ENCODE measurements at regions of chr11 and their contacts with region 1.

Region 1: GRCh38 chr11:43852057-43852636 is 28.5 kb upstream of the ALKBH3 start:
- DNase-seq: peak; percentile 62 to 76 (median 66)
- ATAC-seq: peak; percentile 96
- H3K4me3 ChIP-seq: no peak overlapping the region
- H3K27ac ChIP-seq: no peak overlapping the region
- H3K4me1 ChIP-seq: no peaks in the 10 kb centered on the region
- H3K27me3 ChIP-seq: peaks cover 0 to 4% of the 10 kb centered on the region in 2 experiments; a peak in 2 of 5 replicates
- CTCF ChIP-seq: peak; percentile 72 to 84 (median 75)
- EP300 ChIP-seq: no peak
- POLR2A ChIP-seq: no peak
- RAD21 ChIP-seq: peak; percentile 80 to 89

Region 2: DNA sequence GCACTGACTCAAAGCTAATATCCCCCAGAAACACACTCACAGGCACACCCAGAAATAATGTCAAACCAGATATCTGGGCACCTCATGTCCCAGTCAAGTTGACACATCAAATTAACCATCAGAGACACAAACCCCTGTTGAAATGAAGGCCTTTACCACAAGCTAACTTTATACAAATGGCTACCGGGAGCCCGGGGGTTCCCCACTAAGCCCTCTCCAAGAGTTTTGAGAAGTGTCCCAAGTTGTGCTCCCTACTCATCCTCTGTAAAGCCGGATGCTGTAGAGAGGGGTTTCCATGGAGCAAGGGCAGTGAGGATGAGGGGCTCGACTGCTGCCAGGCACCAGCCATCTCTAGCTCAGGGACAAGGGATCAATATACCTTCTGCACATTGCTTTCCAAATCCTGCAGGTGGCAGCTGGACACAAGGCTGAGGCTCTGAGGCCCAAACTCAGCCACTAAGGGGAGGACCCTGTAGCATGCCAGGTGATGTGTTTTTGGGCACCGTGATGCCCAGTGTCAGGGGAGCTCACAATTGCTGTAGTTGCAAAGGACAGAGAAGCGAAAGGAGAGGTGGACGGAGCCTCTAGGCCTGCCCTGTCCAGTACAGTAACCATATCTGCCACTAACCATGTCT is 347.7 kb before region 1 on chr11:
- CTCF ChIA-PET with region 1: no interaction called
- POLR2A ChIA-PET with region 1: no interaction called
- in situ Hi-C with region 1: no loop called
- intact Hi-C with region 1: loop called (anchors 5 kb)
- DNase-seq: peak in 2 of 4 experiments; percentile 26 to 37
- ATAC-seq: peak; percentile 76
- H3K4me3 ChIP-seq: no peak overlapping the region
- H3K27ac ChIP-seq: no peak overlapping the region
- H3K4me1 ChIP-seq: no peaks in the 10 kb centered on the region
- H3K27me3 ChIP-seq: peaks cover 4 to 27% of the 10 kb centered on the region in 2 experiments; a peak in 4 of 5 replicates
- CTCF ChIP-seq: peak; percentile 45 to 55 (median 53)
- EP300 ChIP-seq: no peak
- POLR2A ChIP-seq: no peak
- RAD21 ChIP-seq: peak; percentile 60 to 70

Region 3: GRCh38 chr11:43557553-43558110 is 294.5 kb before region 1 on chr11:
- CTCF ChIA-PET with region 1: no interaction called
- POLR2A ChIA-PET with region 1: no interaction called
- in situ Hi-C with region 1: no loop called
- intact Hi-C with region 1: loop called (anchors 5 kb)
- DNase-seq: peak in 1 of 4 experiments; percentile 37
- ATAC-seq: peak; percentile 64
- H3K4me3 ChIP-seq: no peak overlapping the region
- H3K27ac ChIP-seq: no peak overlapping the region
- H3K4me1 ChIP-seq: peaks cover 3 to 14% of the 10 kb centered on the region in 2 experiments; a peak in 3 of 5 replicates
- H3K27me3 ChIP-seq: peaks cover 13 to 27% of the 10 kb centered on the region in 2 experiments; a peak in 3 of 5 replicates
- CTCF ChIP-seq: peak in 2 of 3 experiments; percentile 11 to 49; a peak in 2 of 6 replicates
- EP300 ChIP-seq: no peak
- POLR2A ChIP-seq: no peak
- RAD21 ChIP-seq: peak; percentile 40 to 47

Region 4: GRCh38 chr11:43579171-43579918 is 272.8 kb before region 1 on chr11:
- CTCF ChIA-PET with region 1: no interaction called
- POLR2A ChIA-PET with region 1: no interaction called
- in situ Hi-C with region 1: no loop called
- intact Hi-C with region 1: loop called (anchors 5 kb)
- DNase-seq: peak; percentile 41 to 57 (median 46)
- ATAC-seq: peak; percentile 79
- H3K4me3 ChIP-seq: peak overlapping the region; percentile 47
- H3K27ac ChIP-seq: no peak overlapping the region
- H3K4me1 ChIP-seq: peaks cover 0 to 26% of the 10 kb centered on the region in 2 experiments; a peak in 3 of 5 replicates
- H3K27me3 ChIP-seq: peaks cover 32 to 83% of the 10 kb centered on the region in 2 experiments
- CTCF ChIP-seq: peak; percentile 24 to 47 (median 39); a peak in 4 of 6 replicates
- EP300 ChIP-seq: no peak
- POLR2A ChIP-seq: no peak
- RAD21 ChIP-seq: 0 out of 4 replicates have a peak, but pooled peaks of 1 of the 2 experiments have one; percentile 19

Region 5: DNA sequence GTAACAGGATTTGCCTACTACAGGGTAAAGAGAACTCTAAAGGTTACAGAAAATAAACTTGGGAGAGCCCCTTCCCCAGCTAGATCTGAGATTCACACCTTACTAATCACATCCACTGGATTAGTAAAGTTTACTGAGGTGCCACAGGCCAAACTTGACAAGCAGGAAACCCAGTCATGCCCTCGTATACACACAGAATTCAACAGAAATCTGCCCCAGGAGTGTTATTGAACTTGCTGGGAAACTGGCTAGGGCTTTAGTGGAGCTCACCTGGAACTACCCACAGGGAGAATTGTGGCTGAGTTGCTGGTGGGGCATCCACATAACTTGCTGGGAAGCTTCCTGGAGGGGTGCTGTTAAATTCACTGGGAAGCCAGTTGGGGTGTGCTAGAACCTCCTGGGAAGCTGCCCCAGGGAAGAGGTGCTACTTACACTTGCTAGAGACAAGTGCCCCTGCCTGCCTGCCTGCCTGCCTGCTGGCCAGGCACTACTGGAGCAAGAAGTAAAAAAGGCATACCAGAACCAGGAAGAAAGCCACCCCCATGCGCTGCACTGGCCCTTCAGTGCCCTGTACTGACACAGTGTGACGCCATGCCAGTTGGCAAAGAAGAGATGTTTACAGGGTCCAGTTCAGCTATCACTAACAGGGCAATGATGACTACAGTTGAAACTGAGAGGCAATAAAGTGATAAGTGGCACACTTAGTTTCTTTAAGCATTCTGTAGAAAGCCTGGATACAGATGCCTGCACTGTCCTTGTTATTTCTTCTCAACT is 351.3 kb after region 1 on chr11:
- CTCF ChIA-PET with region 1: no interaction called
- POLR2A ChIA-PET with region 1: no interaction called
- in situ Hi-C with region 1: no loop called
- intact Hi-C with region 1: no loop called
- DNase-seq: no peak
- ATAC-seq: no peak
- H3K4me3 ChIP-seq: no peak overlapping the region
- H3K27ac ChIP-seq: no peak overlapping the region
- H3K4me1 ChIP-seq: no peaks in the 10 kb centered on the region; a peak in 1 of 5 replicates
- H3K27me3 ChIP-seq: no peaks in the 10 kb centered on the region
- CTCF ChIP-seq: no peak
- EP300 ChIP-seq: no peak
- POLR2A ChIP-seq: no peak
- RAD21 ChIP-seq: no peak